Activated T-helper 1 cell treated with anti-CD3 and anti-CD28 coated beads, Interleukin-12 subunit alpha, Interleukin-12 subunit beta, Interleukin-2, Interleukin-4 antibody, amounts not matched to agents 30 ng/mL and 10 ng/mL and 1 ng/mL, durations not matched to agents 14 hours and 24 hours and 36 hours (primary cell): ENCODE measurements at regions of chr9 and their contacts with region 1.

Region 1: GRCh38 chr9:5851445-5851844 is 18.5 kb upstream of the ERMP1 start:
- DNase-seq: peak; percentile 49
- H3K4me3 Mint-ChIP-seq: peak overlapping the region; percentile 28
- H3K27ac Mint-ChIP-seq: peak overlapping the region; percentile 68
- H3K4me1 Mint-ChIP-seq: peaks cover 69% of the 10 kb centered on the region
- H3K27me3 Mint-ChIP-seq: no peaks in the 10 kb centered on the region

Region 2: DNA sequence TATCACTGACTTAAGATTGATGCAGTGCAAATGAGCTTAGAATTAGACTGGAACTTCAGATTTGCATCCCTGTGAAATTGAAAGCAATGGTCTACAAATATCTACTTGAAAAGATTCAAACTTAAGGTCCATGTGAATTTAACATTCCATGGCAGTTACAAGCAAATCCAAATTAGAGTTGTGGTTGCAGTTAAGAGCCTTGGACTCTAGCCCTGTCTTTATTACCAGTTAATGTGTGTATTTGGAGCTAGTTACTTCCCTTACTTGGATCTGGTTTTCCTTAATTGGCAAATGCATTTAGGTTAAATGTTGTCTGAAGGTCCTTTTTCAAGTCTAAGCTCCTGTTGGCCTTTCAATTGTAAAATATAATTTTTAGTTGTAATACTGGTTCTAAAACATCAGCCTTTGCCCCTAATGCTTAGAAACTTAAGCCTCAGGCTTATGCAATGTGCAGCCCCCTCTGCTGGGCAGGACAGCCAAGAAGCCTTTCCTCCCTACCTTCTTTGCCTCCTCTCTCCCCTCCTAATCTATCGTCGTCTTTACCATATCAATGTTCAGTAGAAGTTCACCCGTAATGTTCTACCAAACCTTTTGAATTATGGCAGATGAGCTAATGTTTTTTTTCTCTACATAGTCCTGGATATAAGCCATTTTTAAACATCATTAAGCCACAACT is 78.0 kb before region 1 on chr9:
- intact Hi-C with region 1: no loop called
- DNase-seq: no peak
- H3K4me3 Mint-ChIP-seq: no peak overlapping the region
- H3K27ac Mint-ChIP-seq: peak overlapping the region; percentile 58
- H3K4me1 Mint-ChIP-seq: peaks cover 4% of the 10 kb centered on the region
- H3K27me3 Mint-ChIP-seq: no peaks in the 10 kb centered on the region

Region 3: DNA sequence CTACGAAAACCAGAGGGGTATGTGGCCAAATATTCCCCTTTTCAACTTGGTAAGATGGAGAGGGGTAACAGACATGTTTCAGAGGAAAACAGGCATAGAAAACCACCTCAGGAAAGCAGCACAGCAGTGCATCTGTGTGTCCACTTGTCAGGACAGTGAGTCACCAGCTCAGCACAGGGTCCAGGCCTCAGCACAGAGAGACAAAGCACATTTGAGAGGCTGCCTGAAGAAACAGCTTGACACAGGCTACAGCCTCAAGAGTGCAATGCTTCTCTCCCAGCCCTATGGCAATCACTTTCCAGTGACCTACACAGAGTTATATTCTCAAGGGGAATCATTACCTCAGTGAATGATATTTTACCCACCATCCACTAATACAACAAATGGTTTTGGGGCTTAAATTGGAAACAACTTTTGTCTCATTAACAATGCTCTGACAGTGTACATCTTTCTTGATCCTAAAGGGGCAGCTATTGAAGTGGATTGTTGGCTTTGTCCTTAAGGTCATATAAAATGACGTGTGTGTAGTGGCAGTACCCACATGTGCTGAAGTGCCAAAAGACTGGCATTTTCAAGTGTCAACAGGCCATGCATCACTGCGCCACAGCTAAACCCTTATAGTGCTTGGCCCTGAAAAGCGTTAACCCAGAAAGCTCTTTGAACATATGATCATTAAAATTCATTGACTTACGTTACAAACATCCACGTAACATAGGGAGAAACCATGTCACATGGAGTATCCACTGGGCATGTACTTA is 64.9 kb before region 1 on chr9:
- intact Hi-C with region 1: loop called (anchors 5 kb)
- DNase-seq: no peak
- H3K4me3 Mint-ChIP-seq: no peak overlapping the region
- H3K27ac Mint-ChIP-seq: no peak overlapping the region
- H3K4me1 Mint-ChIP-seq: peaks cover 60% of the 10 kb centered on the region
- H3K27me3 Mint-ChIP-seq: no peaks in the 10 kb centered on the region

Region 4: DNA sequence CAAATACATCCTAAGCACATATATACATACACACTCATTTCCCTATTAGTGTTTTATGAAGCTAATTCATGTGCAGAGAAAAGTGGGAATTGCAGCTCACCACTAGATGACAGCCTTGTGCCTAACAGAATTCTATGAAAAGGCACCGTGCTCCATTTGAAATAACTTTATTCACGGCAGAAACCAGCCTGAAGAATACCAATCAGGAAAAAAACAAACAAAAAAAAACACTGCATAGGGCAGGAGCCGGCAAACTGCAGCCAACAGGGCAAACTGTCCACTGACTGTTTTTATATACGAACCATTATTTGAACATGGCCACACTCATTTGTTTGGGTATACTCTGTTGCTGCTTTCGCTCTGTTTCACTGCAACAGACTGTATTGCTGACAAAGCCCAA is 52.1 kb before region 1 on chr9:
- intact Hi-C with region 1: loop called (anchors 2 kb)
- DNase-seq: no peak
- H3K4me3 Mint-ChIP-seq: no peak overlapping the region
- H3K27ac Mint-ChIP-seq: no peak overlapping the region
- H3K4me1 Mint-ChIP-seq: peaks cover 37% of the 10 kb centered on the region
- H3K27me3 Mint-ChIP-seq: no peaks in the 10 kb centered on the region

Region 5: DNA sequence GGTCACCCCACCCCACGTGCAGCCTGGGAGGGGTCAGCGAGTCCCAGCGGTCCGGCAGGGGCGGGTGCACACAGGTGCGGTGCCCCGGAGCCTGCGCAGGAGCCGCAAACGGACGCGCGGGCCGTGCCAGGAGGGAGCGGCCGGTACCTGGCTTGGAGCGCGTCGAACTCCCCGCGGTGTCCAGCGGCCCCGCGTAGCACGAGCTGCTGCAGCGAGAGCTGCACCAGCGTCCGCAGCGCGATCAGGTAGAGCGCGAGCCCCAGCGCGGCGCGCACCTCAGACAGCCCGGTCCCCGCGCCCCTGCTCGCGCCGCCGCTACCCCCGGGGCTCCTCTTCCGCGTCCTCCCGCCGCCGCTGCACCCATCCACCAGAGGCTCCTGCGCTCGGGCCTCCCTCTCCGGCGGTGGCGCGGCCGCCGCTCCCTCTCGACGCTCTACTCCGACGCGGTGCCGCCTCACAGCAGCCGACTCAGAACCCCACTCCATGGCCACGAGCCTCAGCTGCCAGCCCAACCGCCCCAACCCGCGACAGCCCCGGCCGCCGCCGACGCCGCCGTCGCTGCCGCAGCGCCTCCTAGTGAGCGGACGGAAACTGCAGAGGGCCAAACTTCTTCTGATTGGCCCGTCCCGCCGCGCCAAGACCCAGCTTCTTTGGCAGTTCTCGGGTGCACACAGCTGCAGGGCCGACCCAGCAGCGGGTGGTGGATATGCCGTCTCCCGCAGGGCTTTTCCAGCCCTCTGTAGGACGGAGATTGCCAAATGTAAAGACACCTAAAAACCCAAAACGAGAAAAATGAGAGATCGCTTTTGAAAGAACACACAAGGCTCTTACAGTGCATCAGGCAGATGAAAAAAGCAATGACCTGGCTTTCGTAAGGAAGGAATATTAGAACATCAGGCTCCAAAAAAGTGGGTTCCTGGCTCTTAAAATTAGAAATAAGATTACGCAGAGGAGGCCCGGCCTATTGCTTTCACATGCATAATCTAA is 18.6 kb before region 1 on chr9 and contains the start of gene ERMP1:
- intact Hi-C with region 1: loop called (anchors 1 kb)
- DNase-seq: peak; percentile 89
- H3K4me3 Mint-ChIP-seq: peak within 1 kb of the TSS; percentile 92
- H3K27ac Mint-ChIP-seq: peak within 1 kb of the TSS; percentile 82
- H3K4me1 Mint-ChIP-seq: peaks cover 62% of the 10 kb centered on the region
- H3K27me3 Mint-ChIP-seq: no peaks in the 10 kb centered on the region
- total RNA-seq, gene ERMP1: 23.1 and 24.1 TPM in 2 replicates

Region 6: DNA sequence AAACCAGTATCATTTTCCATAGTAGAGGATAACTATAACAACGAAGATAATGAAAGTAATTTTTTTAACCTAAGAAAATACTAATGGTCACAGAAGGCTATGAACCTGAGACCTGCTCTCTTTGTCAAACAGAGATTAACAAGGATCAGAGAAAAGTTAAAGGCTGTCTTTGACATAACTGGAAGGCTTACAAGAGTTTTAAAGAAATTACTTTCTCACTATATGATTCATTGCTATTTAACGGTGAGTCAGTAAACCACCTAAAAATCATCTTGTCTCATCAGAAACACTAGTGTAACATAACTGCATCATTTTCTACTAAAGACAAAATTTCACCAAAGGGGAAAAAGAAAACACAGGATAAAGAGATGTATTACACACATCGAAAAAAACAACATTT is 58.5 kb after region 1 on chr9:
- intact Hi-C with region 1: loop called (anchors 1 kb)
- DNase-seq: no peak
- H3K4me3 Mint-ChIP-seq: no peak overlapping the region
- H3K27ac Mint-ChIP-seq: peak overlapping the region; percentile 84
- H3K4me1 Mint-ChIP-seq: peaks cover 17% of the 10 kb centered on the region
- H3K27me3 Mint-ChIP-seq: no peaks in the 10 kb centered on the region

Region 7: GRCh38 chr9:6566409-6567139 is 715.1 kb after region 1 on chr9:
- intact Hi-C with region 1: loop called (anchors 5 kb)
- DNase-seq: peak; percentile 44
- H3K4me3 Mint-ChIP-seq: peak overlapping the region; percentile 57
- H3K27ac Mint-ChIP-seq: peak overlapping the region; percentile 80
- H3K4me1 Mint-ChIP-seq: peaks cover 26% of the 10 kb centered on the region
- H3K27me3 Mint-ChIP-seq: peaks cover 4% of the 10 kb centered on the region